Calu3 (cell line): ENCODE measurements at regions of chr7 and their contacts with region 1.

Region 1: GRCh38 chr7:103718482-103719415 is 270.7 kb downstream of the RELN start:
- DNase-seq: no peak
- H3K4me3 Mint-ChIP-seq: no peak overlapping the region
- H3K27ac Mint-ChIP-seq: peak overlapping the region; percentile 97
- H3K4me1 Mint-ChIP-seq: peaks cover 16% of the 10 kb centered on the region
- H3K27me3 Mint-ChIP-seq: no peaks in the 10 kb centered on the region
- CTCF ChIP-seq: no peak

Region 2: GRCh38 chr7:103379270-103379975 is 339.3 kb before region 1 on chr7:
- CTCF ChIA-PET with region 1: no interaction called
- intact Hi-C with region 1: no loop called
- DNase-seq: no peak
- H3K4me3 Mint-ChIP-seq: no peak overlapping the region
- H3K27ac Mint-ChIP-seq: no peak overlapping the region
- H3K4me1 Mint-ChIP-seq: no peaks in the 10 kb centered on the region
- H3K27me3 Mint-ChIP-seq: no peaks in the 10 kb centered on the region
- CTCF ChIP-seq: no peak

Region 3: GRCh38 chr7:103504505-103505135 is 214.1 kb before region 1 on chr7:
- CTCF ChIA-PET with region 1: no interaction called
- intact Hi-C with region 1: no loop called
- DNase-seq: no peak
- H3K4me3 Mint-ChIP-seq: no peak overlapping the region
- H3K27ac Mint-ChIP-seq: no peak overlapping the region
- H3K4me1 Mint-ChIP-seq: no peaks in the 10 kb centered on the region
- H3K27me3 Mint-ChIP-seq: peaks cover 52% of the 10 kb centered on the region
- CTCF ChIP-seq: no peak

Region 4: GRCh38 chr7:103637094-103637493 is 81.7 kb before region 1 on chr7:
- CTCF ChIA-PET with region 1: no interaction called
- intact Hi-C with region 1: loop called (anchors 10 kb)
- DNase-seq: no peak
- H3K4me3 Mint-ChIP-seq: peak overlapping the region; percentile 37
- H3K27ac Mint-ChIP-seq: peak overlapping the region; percentile 99
- H3K4me1 Mint-ChIP-seq: peaks cover 26% of the 10 kb centered on the region
- H3K27me3 Mint-ChIP-seq: no peaks in the 10 kb centered on the region
- CTCF ChIP-seq: no peak

Region 5: GRCh38 chr7:103851357-103851756 is 132.6 kb after region 1 on chr7:
- CTCF ChIA-PET with region 1: no interaction called
- intact Hi-C with region 1: no loop called
- DNase-seq: no peak
- H3K4me3 Mint-ChIP-seq: no peak overlapping the region
- H3K27ac Mint-ChIP-seq: no peak overlapping the region
- H3K4me1 Mint-ChIP-seq: no peaks in the 10 kb centered on the region
- H3K27me3 Mint-ChIP-seq: peaks cover 17% of the 10 kb centered on the region
- CTCF ChIP-seq: no peak